Transverse colon (tissue), 4 donors: ENCODE measurements at regions of chrX and their contacts with region 1.

Region 1: DNA sequence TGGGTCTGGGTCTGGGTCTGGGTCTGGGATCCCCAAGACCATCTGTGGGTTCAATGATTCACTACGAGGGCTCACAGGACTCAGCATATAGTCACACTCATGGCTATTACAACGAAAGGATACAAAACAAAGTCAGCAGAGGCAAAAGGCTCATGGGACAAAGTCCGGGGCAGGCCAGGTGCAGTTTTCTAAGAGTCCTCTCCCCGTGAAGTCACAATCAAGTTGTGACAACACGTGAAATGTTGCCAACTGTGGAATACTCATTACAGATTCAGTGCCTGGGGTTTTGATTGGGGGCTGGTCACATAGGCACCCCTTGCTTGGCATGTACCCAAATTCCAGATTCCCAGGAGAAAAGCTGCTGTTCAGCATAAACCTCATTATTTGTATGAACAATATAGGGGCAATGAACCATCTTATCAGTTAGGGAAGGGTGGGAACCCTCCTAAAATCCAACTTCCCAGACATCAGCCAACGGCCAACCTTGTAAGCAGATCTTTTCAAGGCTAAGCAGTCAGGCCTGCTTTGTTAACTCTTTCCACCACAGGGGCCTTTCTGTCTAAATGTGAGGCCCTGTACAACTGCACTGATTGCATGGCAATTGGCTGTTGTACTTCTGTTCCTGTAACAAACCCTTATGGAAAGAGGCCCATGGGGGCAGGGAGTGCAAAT is 58.2 kb upstream of the DIPK2B start:
- DNase-seq: peak; percentile 42
- H3K4me3 ChIP-seq: no peak overlapping the region
- H3K27ac ChIP-seq: peak overlapping the region in 3 of 4 donors; percentile 48 to 62 (median 49)
- H3K4me1 ChIP-seq: no peaks in the 10 kb centered on the region
- H3K27me3 ChIP-seq: no peaks in the 10 kb centered on the region
- CTCF ChIP-seq: no peak
- EP300 ChIP-seq: peak; percentile 30
- POLR2A ChIP-seq: no peak

Region 2: DNA sequence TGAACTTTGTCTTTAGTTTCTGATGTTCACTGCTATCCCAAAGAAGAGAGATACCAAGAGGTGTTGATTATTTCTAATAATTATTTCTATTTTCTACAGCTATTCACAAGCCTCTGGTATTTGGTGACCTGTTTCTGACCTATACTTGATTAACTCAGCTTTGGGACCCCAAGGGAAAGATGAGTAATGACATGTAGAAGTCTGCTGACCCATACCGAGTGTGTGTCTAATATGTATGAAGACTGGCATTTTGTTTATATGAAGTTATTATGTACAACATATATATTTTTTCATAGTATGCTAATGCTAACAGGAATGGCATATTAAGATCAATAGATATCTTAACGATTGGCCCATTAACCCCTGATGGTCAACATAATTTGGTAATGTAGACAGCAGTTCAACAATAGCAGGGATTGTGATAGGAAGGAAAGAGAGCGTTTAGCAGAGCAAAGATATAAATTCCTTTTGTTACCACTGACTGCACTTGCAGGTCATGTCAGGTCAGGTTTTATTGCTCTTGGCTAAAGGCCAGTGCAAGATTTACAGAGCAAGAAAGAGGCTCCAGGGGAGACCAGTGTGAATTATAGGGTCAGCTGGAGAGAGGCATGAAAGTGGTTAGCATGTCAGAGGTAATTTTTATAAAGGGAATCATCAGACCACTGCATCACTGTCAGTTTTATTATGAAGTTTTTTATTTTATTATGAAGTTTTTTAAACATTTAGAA is 36.6 kb after region 1 on chrX:
- in situ Hi-C with region 1: no loop called
- intact Hi-C with region 1: loop called (anchors 1 kb)
- DNase-seq: peak; percentile 35
- H3K4me3 ChIP-seq: no peak overlapping the region
- H3K27ac ChIP-seq: no peak overlapping the region
- H3K4me1 ChIP-seq: no peaks in the 10 kb centered on the region
- H3K27me3 ChIP-seq: no peaks in the 10 kb centered on the region
- CTCF ChIP-seq: no peak
- EP300 ChIP-seq: no peak
- POLR2A ChIP-seq: no peak